ENCODE measurements at regions of chr11 and their contacts with region 1.

Region 1: GRCh38 chr11:65418711-65419459 is 3.7 kb upstream of the NEAT1 start:
- DNase-seq: peak; percentile 64 to 87 (median 70)
- H3K4me3 ChIP-seq: peak overlapping the region; percentile 86 to 95
- H3K4me3 Mint-ChIP-seq: peak overlapping the region; percentile 92 to 97 (median 95)
- H3K27ac ChIP-seq: peak overlapping the region; percentile 98
- H3K27ac Mint-ChIP-seq: peak overlapping the region; percentile 93 to 100 (median 97)
- H3K4me1 ChIP-seq: peaks cover 57% of the 10 kb centered on the region
- H3K4me1 Mint-ChIP-seq: peaks cover 30 to 72% (median 42%) of the 10 kb centered on the region in 4 donors
- H3K27me3 ChIP-seq: no peaks in the 10 kb centered on the region
- H3K27me3 Mint-ChIP-seq: peaks cover 0 to 4% of the 10 kb centered on the region in 2 donors

Region 2: GRCh38 chr11:65382033-65382807 is 36.7 kb before region 1 on chr11 and contains the start of gene SLC25A45:
- CTCF ChIA-PET with region 1: interaction called, 29 read pairs
- POLR2A ChIA-PET with region 1: interaction called, 524 read pairs
- intact Hi-C with region 1: loop called (anchors 1 kb)
- DNase-seq: peak; percentile 89 to 98 (median 91)
- H3K4me3 ChIP-seq: peak within 1 kb of the TSS; percentile 67 to 76
- H3K4me3 Mint-ChIP-seq: peak within 1 kb of the TSS; percentile 85 to 95 (median 91)
- H3K27ac ChIP-seq: peak within 1 kb of the TSS; percentile 94
- H3K27ac Mint-ChIP-seq: peak within 1 kb of the TSS; percentile 96 to 100 (median 99)
- H3K4me1 ChIP-seq: peaks cover 58% of the 10 kb centered on the region
- H3K4me1 Mint-ChIP-seq: peaks cover 22 to 63% (median 44%) of the 10 kb centered on the region in 4 donors
- H3K27me3 ChIP-seq: no peaks in the 10 kb centered on the region
- H3K27me3 Mint-ChIP-seq: no peaks in the 10 kb centered on the region
- total RNA-seq, gene SLC25A45: 17.0 to 24.2 TPM

Region 3: DNA sequence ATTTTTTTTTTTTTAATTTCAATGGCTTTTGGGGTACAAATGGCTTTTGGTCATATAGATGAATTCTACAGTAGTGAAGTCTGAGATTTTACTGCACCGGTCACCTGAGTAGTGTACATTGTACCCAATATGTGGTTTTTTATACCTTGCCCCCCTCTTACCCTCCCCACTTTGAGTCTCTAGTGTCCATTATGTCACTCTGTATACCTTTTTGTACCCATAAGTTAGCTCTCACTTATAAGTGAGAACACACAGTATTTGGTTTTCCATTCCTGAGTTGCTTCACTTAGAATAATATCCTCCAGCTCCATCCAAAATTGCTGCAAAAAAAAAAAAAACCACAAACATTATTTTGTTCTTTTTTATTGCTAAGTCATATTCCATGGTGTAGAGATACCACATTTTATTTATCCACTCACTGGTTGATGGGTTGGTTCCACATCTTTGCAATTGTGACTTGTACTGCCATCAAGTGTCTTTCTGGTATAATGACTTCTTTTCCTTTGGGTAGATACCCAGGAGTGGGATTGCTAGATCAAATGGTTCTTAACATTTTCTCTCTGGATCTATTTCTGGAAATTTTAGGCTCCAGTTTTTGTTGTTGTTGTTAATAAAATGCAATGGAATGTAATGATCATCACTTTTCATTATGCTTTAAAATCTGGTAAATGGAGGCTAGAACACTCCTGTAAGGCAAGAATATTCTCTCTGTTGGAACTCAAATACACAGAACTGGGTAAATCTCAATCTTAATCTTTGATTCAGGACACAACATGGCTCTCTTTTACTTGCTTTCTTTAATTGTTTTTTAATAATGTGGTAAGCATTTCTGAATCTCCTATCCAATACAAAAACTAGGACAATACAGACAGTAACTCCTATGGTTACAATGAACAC is 14.0 kb after region 1 on chr11:
- CTCF ChIA-PET with region 1: interaction called, 49 read pairs
- POLR2A ChIA-PET with region 1: interaction called, 446 read pairs
- intact Hi-C with region 1: loop called (anchors 1 kb)
- DNase-seq: peak in 4 of 5 donors; percentile 55 to 68 (median 60)
- H3K4me3 ChIP-seq: no peak overlapping the region
- H3K4me3 Mint-ChIP-seq: peak overlapping the region in 5 of 8 donors; percentile 27 to 61 (median 40)
- H3K27ac ChIP-seq: peak overlapping the region; percentile 2
- H3K27ac Mint-ChIP-seq: peak overlapping the region; percentile 77 to 94 (median 89)
- H3K4me1 ChIP-seq: peaks cover 77% of the 10 kb centered on the region
- H3K4me1 Mint-ChIP-seq: peaks cover 65 to 92% (median 76%) of the 10 kb centered on the region in 4 donors
- H3K27me3 ChIP-seq: no peaks in the 10 kb centered on the region
- H3K27me3 Mint-ChIP-seq: no peaks in the 10 kb centered on the region

Region 4: DNA sequence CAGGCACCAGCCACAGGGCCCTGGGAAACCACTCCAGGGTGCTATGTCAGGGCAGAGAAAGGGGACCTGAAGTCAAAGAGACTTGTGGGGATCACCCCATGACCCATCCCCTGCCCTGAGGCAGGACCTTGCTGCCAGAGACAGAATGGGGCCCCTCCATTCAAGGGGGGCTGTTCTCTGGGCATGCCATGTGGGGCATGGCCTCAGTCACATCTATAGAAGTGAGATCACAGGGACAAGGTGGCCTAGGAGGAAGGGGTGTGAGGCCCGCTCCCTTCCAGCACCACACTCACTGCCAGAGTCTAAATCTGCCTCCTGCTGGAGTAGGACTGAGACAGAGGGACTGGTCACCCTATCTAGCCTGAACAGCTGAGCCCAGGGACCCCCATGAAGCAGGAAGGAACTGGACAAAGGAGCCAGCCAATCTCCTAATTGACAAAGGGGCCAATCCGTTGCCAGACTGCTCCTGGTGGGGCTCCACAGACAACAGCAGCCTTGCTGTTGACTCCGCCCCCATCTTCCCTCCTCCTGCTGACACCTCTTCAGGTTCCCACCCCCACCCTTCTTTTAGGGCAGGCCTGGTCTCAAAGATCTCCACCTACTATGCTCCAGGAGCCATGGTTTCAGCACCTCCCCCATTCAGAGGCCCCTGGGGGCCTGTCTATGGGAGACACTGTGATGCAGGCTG is 29.7 kb after region 1 on chr11:
- CTCF ChIA-PET with region 1: interaction called, 11 read pairs
- POLR2A ChIA-PET with region 1: interaction called, 224 read pairs
- intact Hi-C with region 1: no loop called
- DNase-seq: peak in 1 of 5 donors; percentile 33
- H3K4me3 ChIP-seq: no peak overlapping the region
- H3K4me3 Mint-ChIP-seq: no peak overlapping the region
- H3K27ac ChIP-seq: no peak overlapping the region
- H3K27ac Mint-ChIP-seq: peak overlapping the region in 5 of 7 donors; percentile 38 to 64 (median 53)
- H3K4me1 ChIP-seq: no peaks in the 10 kb centered on the region
- H3K4me1 Mint-ChIP-seq: peaks cover 3 to 17% (median 4%) of the 10 kb centered on the region in 4 donors
- H3K27me3 ChIP-seq: no peaks in the 10 kb centered on the region
- H3K27me3 Mint-ChIP-seq: no peaks in the 10 kb centered on the region

Region 5: GRCh38 chr11:65471410-65471762 is 52.5 kb after region 1 on chr11:
- CTCF ChIA-PET with region 1: interaction called, 88 read pairs
- POLR2A ChIA-PET with region 1: interaction called, 679 read pairs
- intact Hi-C with region 1: loop called (anchors 1 kb)
- DNase-seq: no peak
- H3K4me3 ChIP-seq: no peak overlapping the region
- H3K4me3 Mint-ChIP-seq: peak overlapping the region in 1 of 8 donors; percentile 74
- H3K27ac ChIP-seq: peak overlapping the region; percentile 74
- H3K27ac Mint-ChIP-seq: peak overlapping the region; percentile 88 to 99 (median 98)
- H3K4me1 ChIP-seq: peaks cover 18% of the 10 kb centered on the region
- H3K4me1 Mint-ChIP-seq: peaks cover 12 to 27% (median 22%) of the 10 kb centered on the region in 4 donors
- H3K27me3 ChIP-seq: no peaks in the 10 kb centered on the region
- H3K27me3 Mint-ChIP-seq: no peaks in the 10 kb centered on the region

Region 6: GRCh38 chr11:65524741-65525545 is 106.1 kb after region 1 on chr11 and contains the start of gene SCYL1:
- CTCF ChIA-PET with region 1: interaction called, 4 read pairs
- POLR2A ChIA-PET with region 1: interaction called, 23 read pairs
- intact Hi-C with region 1: no loop called
- DNase-seq: peak; percentile 72 to 82 (median 75)
- H3K4me3 ChIP-seq: peak within 1 kb of the TSS; percentile 78 to 83
- H3K4me3 Mint-ChIP-seq: peak within 1 kb of the TSS; percentile 81 to 92 (median 88)
- H3K27ac ChIP-seq: peak within 1 kb of the TSS; percentile 84
- H3K27ac Mint-ChIP-seq: peak within 1 kb of the TSS; percentile 81 to 98 (median 94)
- H3K4me1 ChIP-seq: peaks cover 54% of the 10 kb centered on the region
- H3K4me1 Mint-ChIP-seq: peaks cover 35 to 63% (median 49%) of the 10 kb centered on the region in 4 donors
- H3K27me3 ChIP-seq: no peaks in the 10 kb centered on the region
- H3K27me3 Mint-ChIP-seq: no peaks in the 10 kb centered on the region
- total RNA-seq, gene SCYL1: 72.5 to 81.3 TPM

Region 7: GRCh38 chr11:65695456-65696241 is 276.8 kb after region 1 on chr11:
- CTCF ChIA-PET with region 1: no interaction called
- POLR2A ChIA-PET with region 1: no interaction called
- intact Hi-C with region 1: no loop called
- DNase-seq: no peak
- H3K4me3 ChIP-seq: no peak overlapping the region
- H3K4me3 Mint-ChIP-seq: no peak overlapping the region
- H3K27ac ChIP-seq: no peak overlapping the region
- H3K27ac Mint-ChIP-seq: no peak overlapping the region
- H3K4me1 ChIP-seq: no peaks in the 10 kb centered on the region
- H3K4me1 Mint-ChIP-seq: no peaks in the 10 kb centered on the region
- H3K27me3 ChIP-seq: no peaks in the 10 kb centered on the region
- H3K27me3 Mint-ChIP-seq: peaks cover 0 to 1% of the 10 kb centered on the region in 2 donors

Measured in CD4-positive, alpha-beta memory T cell (primary cell).